ENCODE measurements at regions of chr19 and their contacts with region 1.

Region 1: GRCh38 chr19:38964738-38965137 is 10.8 kb downstream of the FBXO17 start:
- DNase-seq: no peak
- ATAC-seq: no peak
- H3K4me3 ChIP-seq: no peak overlapping the region
- H3K27ac ChIP-seq: no peak overlapping the region
- H3K4me1 ChIP-seq: peaks cover 3% of the 10 kb centered on the region; the same call in 1 of the 2 replicates
- H3K27me3 ChIP-seq: no peaks in the 10 kb centered on the region
- CTCF ChIP-seq: no peak

Region 2: GRCh38 chr19:38917516-38918491 is 46.9 kb before region 1 on chr19:
- CTCF ChIA-PET with region 1: no interaction called
- POLR2A ChIA-PET with region 1: no interaction called
- intact Hi-C with region 1: no loop called
- DNase-seq: peak; percentile 5
- ATAC-seq: peak; percentile 61
- H3K4me3 ChIP-seq: no peak overlapping the region
- H3K27ac ChIP-seq: no peak overlapping the region
- H3K4me1 ChIP-seq: no peaks in the 10 kb centered on the region
- H3K27me3 ChIP-seq: no peaks in the 10 kb centered on the region
- CTCF ChIP-seq: 0 out of 2 replicates have a peak, but pooled peaks have one; percentile 26

Region 3: GRCh38 chr19:39038098-39038497 is 73.4 kb after region 1 on chr19:
- CTCF ChIA-PET with region 1: no interaction called
- POLR2A ChIA-PET with region 1: no interaction called
- intact Hi-C with region 1: loop called (anchors 1 kb)
- DNase-seq: peak; percentile 42
- ATAC-seq: peak; percentile 77
- H3K4me3 ChIP-seq: no peak overlapping the region
- H3K27ac ChIP-seq: no peak overlapping the region
- H3K4me1 ChIP-seq: no peaks in the 10 kb centered on the region; the same call in 1 of the 2 replicates
- H3K27me3 ChIP-seq: no peaks in the 10 kb centered on the region
- CTCF ChIP-seq: peak; percentile 32; the same call in 1 of the 2 replicates

Region 4: DNA sequence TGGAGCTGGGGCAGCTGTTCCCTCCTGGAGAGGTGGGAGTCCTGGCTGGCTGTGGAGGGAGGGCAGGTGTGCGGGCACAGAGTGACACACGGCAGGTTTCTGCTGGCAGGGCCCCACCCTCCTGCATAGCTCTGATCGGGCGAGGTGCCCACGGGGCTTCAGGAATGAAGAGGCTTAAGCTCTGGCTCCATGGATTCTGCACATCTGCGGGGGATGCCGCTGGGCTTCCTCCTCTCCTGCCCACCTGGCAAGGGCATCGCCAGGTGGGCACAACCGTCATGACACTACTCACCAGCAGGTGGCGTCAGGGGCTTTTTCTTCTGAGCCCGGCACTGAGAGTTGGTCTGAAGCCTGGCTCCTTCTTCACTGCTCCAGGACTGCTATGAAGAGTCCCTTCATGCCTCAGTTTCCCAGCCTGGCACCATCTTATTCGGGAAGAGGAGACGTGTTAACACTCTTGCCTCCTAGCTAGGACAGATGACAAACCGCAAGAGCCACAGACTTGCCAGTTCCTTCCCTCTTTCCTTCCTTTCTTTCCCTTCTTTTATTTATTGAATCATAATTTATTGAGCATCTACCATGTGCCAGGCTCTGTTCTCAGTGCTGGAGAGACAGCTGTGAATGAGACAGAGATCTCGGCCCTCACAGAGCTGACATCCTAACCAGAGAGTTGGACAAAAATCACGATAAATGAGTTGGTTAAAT is 145.7 kb after region 1 on chr19:
- CTCF ChIA-PET with region 1: no interaction called
- POLR2A ChIA-PET with region 1: no interaction called
- intact Hi-C with region 1: loop called (anchors 5 kb)
- DNase-seq: peak; percentile 61
- ATAC-seq: peak; percentile 33; the same call in 1 of the 2 replicates
- H3K4me3 ChIP-seq: no peak overlapping the region
- H3K27ac ChIP-seq: peak overlapping the region; percentile 97; the same call in 1 of the 2 replicates
- H3K4me1 ChIP-seq: peaks cover 11% of the 10 kb centered on the region
- H3K27me3 ChIP-seq: no peaks in the 10 kb centered on the region
- CTCF ChIP-seq: peak; percentile 74

Region 5: GRCh38 chr19:39187559-39187957 is 222.8 kb after region 1 on chr19:
- CTCF ChIA-PET with region 1: no interaction called
- POLR2A ChIA-PET with region 1: no interaction called
- intact Hi-C with region 1: loop called (anchors 5 kb)
- DNase-seq: no peak
- ATAC-seq: peak; percentile 31; the same call in 1 of the 2 replicates
- H3K4me3 ChIP-seq: no peak overlapping the region
- H3K27ac ChIP-seq: no peak overlapping the region
- H3K4me1 ChIP-seq: no peaks in the 10 kb centered on the region
- H3K27me3 ChIP-seq: no peaks in the 10 kb centered on the region
- CTCF ChIP-seq: peak; percentile 18; the same call in 1 of the 2 replicates

Region 6: DNA sequence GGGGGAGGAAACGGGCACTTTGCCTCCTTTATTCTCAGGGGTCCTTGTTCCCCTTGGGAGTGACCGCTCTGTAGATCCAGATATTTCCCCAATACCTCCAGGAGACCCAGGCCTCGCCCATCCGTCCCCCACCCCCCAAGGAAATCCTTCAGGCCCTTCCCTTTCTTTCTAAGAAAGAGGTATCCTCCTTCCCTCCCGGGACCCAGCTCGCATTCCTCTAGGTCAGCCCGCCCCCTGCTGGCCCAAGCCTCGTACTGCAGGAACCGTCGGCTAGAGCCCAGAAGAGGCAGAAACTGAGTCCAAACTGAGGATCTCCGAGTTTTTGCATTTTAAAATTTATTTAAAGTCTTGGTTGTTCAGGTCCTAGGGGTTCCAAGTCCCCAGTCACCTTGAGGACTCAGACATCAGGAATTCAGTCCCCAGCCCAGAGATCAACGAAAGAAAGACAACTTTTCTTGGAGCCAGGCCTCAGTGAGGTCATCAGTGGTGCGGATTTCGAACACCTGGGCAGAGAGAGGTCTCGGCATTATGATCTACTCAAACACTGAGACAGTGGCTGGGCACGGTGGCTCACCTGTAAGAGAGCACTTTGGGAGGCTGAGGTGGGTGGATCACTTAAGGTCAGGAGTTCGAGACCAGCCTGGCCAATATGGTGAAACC is 363.4 kb after region 1 on chr19:
- CTCF ChIA-PET with region 1: no interaction called
- POLR2A ChIA-PET with region 1: no interaction called
- intact Hi-C with region 1: loop called (anchors 10 kb)
- DNase-seq: peak; percentile 79
- ATAC-seq: peak; percentile 65
- H3K4me3 ChIP-seq: no peak overlapping the region
- H3K27ac ChIP-seq: no peak overlapping the region
- H3K4me1 ChIP-seq: no peaks in the 10 kb centered on the region
- H3K27me3 ChIP-seq: no peaks in the 10 kb centered on the region
- CTCF ChIP-seq: peak; percentile 90

Measured in PC-3 (cell line).